Dorsolateral prefrontal cortex (tissue), 120 donors: ENCODE measurements at regions of chr4 and their contacts with region 1.

Region 1: DNA sequence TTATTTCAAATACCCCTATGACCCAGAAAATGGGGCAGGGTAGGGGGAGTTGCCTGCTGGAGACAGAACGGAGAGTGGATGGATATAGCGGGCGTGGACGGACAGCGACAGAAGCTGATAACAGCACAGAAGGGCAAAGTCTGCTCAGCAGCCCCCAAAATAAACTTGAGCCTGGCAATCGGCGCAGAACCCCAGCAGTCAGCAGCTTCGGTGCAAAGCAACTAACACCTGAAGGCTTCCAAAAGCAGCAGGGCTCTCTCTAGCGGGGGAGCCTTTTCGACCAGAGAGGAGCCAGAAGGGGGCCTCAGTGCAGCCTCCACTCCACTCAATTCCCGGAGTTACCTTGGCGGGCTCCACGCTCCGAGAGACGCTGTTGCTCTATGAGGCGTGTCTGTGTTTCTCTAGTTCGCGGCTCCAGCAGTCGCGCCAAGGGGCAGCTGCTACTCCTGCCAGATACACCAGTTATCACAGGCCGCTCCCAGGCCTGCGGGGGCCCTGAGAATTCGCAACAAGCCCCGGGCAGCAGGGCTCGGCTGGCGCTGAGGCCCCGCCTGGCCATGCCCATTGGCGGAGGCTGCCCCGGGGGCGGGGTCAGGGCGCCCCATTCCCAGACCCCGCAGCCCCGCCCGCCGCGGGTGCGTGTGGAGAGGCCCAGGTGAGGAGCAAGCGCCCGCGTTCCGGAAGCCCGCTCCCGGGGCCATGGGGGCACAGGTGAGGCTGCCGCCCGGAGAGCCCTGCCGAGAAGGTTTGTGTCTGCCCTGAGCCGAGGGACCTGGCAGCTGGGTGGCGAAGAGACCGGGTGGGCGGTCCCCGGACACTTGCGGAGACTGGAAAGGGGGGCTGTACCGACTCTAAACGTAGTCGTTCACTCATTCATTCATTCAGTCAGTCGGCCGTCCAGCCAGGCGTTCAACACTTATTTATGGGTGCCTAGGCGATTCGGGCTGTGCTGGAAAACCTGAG is at the starts of genes CNGA1 and NIPAL1:
- DNase-seq: peak in 9 of 10 donors; percentile 28 to 72 (median 48)
- H3K4me3 ChIP-seq: peak within 1 kb of the TSS; percentile 49 to 82 (median 70)
- H3K27ac ChIP-seq: peak within 1 kb of the TSS in 2 of 59 donors; percentile 1 to 52
- H3K27me3 ChIP-seq: peaks cover 0 to 15% (median 0%) of the 10 kb centered on the region in 45 donors
- CTCF ChIP-seq: peak in 32 of 56 donors; percentile 9 to 49 (median 25)
- total RNA-seq, gene CNGA1: 0.16 to 3.8 (median 0.50) TPM in 34 of 120 experiments, not detected in the others
- total RNA-seq, gene NIPAL1: 0.18 to 4.9 (median 1.3) TPM

Region 2: DNA sequence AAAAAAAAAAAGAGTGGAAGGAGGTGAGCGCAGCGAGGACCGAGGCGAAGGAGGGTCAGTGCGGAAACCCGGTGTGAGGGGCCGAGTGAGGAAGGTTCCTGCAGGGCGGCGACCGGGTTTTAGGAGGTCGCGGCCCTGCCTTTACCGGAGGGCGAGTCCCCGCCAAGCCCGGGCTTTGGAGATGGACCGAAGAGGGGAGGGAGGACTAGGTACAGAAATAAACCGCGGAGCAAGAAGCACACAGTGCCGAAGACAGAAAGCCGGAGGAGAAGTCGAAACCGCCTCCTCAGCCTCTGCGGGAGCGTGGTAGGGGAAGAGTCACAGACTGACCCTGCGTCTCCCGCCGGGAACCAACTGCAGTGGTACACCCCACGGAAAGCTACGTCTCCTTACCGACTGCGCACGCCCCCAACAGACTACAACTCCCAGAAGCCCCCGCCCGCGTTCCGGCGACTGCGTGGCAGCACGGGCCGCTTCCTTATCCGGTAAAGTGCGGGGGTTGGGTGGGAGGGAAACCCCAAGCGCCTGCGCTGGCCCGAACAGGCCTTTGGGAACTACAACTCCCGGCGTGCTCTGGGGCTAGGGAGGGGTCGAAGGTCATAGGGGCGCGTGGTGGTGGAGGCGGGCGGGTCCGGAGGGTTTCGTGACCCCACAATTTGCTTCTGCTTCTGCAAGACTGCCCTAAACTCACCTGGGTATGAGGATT is 102.0 kb before region 1 on chr4 and contains the start of gene NFXL1:
- intact Hi-C with region 1: loop called in 1 of 2 experiments (anchors 10 kb)
- DNase-seq: peak; percentile 95 to 98 (median 97)
- H3K4me3 ChIP-seq: peak within 1 kb of the TSS; percentile 65 to 99 (median 92)
- H3K27ac ChIP-seq: peak within 1 kb of the TSS in 53 of 59 donors; percentile 5 to 92 (median 72)
- H3K27me3 ChIP-seq: no peaks in the 10 kb centered on the region
- CTCF ChIP-seq: peak in 18 of 56 donors; percentile 5 to 43 (median 20)
- total RNA-seq, gene NFXL1: 15.0 to 36.5 (median 22.0) TPM

Region 3: DNA sequence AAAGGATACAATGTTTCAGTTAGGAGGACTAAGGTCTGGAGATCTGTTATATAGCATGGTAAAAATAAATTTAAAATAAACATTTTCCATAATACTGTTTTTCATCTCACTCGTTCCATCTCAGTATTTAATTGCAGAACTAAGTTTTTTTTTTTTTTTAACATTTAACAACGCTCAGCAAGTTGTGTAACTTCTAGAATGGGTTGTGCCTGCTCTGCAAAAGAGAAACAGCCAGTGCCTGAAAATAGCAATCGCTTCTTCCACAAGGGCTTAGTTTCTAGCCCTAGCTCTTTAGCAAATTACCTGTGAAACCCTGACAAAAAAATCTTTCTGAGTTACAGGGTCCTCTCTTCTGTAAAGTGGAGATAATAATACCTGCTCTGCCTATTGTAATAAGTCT is 41.9 kb before region 1 on chr4:
- intact Hi-C with region 1: no loop called
- DNase-seq: no peak
- H3K4me3 ChIP-seq: no peak overlapping the region
- H3K27ac ChIP-seq: peak overlapping the region in 3 of 59 donors; percentile 3 to 23 (median 16)
- H3K27me3 ChIP-seq: no peaks in the 10 kb centered on the region
- CTCF ChIP-seq: no peak

Region 4: DNA sequence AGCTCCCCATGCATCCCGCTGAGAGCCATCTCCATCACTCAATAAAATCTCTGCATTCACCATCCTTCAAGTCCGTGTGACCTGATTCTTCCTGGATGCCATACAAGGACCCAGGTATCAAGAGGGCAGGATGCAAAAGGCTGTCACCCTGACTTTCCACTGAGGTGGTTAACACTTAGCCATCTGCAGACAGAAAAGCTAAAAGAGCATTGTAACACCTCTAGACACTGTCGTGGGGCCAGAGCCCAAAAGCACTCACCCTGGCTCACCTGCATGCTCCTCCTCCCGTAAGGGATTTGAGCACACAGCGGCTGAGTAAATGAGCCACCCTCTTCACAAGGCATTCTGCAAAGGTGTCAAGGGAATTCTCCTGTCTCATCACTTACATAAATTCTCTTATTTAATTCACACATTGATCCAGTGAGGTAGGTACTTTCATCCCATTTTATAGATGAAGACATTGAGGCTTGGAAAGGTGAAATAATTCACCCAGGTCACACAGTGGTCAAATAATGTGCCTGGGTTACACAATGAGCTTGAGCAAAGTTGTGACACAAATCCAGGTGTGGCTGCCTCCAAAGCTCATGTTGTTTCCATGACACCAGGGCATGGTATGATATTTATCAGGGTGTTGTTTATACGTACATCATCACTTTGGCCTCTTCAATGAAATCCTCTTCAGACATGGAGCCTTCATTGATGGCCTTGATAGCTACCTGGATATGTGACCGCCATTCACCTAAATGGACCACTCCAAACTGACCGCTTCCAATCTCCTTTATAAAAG is 69.6 kb after region 1 on chr4:
- intact Hi-C with region 1: loop called in 1 of 2 experiments (anchors 5 kb)
- DNase-seq: no peak
- H3K4me3 ChIP-seq: no peak overlapping the region
- H3K27ac ChIP-seq: no peak overlapping the region
- H3K27me3 ChIP-seq: peaks cover 0 to 21% (median 0%) of the 10 kb centered on the region in 45 donors
- CTCF ChIP-seq: no peak